Activated CD4-positive, alpha-beta memory T cell treated with anti-CD3 and anti-CD28 coated beads for 36 hours (primary cell): ENCODE measurements at regions of chr3 and their contacts with region 1.

Region 1: DNA sequence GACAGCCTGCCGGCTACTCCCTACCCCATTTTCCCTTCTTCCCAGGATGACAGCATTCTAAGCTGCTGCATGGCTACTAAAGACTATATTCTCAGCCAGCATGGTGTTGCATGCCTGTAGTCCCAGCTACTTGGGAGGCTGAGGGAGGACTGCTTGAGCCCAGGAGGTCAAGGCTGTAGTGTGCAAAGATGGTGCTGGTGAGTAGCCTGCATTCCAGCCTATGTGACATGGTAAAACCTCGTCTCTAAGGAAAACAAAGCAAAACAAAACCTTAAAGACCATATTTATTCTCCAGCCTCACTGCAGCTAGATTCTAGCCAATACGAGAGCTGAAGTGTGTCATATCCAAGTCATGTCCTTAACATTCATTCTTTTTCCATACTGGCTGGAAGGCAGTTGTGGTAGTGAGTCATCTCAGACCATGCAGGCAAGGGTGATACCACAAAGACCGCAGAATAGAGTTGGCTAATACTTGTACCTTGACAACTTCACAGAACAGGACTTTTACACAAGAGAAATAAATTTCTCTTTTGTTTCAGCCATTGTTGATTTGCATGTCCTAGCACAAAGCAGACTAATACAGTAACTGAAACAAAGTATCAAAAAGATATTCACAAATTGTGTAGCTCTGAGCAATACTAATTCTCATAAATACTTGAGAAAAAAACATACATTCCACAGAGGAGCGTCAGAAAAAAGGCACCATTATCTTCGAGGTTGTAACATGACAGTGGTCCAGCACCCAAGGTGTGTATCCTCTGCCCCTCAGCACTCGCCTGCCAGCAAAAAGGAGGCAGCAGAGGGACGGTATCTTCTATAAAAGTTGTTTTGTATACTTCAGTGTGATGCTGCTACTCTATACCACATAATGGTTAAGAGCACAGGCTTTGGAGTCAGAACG is 14.8 kb downstream of the PBRM1 start:
- DNase-seq: peak; percentile 84
- H3K4me3 Mint-ChIP-seq: peak overlapping the region; percentile 51
- H3K27ac Mint-ChIP-seq: peak overlapping the region; percentile 82
- H3K4me1 Mint-ChIP-seq: peaks cover 42% of the 10 kb centered on the region
- H3K27me3 Mint-ChIP-seq: no peaks in the 10 kb centered on the region

Region 2: GRCh38 chr3:51445544-51446280 is 1225.2 kb before region 1 on chr3:
- CTCF ChIA-PET with region 1: no interaction called
- POLR2A ChIA-PET with region 1: no interaction called
- intact Hi-C with region 1: no loop called
- DNase-seq: no peak
- H3K4me3 Mint-ChIP-seq: no peak overlapping the region
- H3K27ac Mint-ChIP-seq: peak overlapping the region; percentile 23
- H3K4me1 Mint-ChIP-seq: peaks cover 33% of the 10 kb centered on the region
- H3K27me3 Mint-ChIP-seq: no peaks in the 10 kb centered on the region

Region 3: GRCh38 chr3:52620580-52620979 is 50.3 kb before region 1 on chr3:
- CTCF ChIA-PET with region 1: no interaction called
- POLR2A ChIA-PET with region 1: interaction called, 4 read pairs
- intact Hi-C with region 1: loop called (anchors 1 kb)
- DNase-seq: no peak
- H3K4me3 Mint-ChIP-seq: no peak overlapping the region
- H3K27ac Mint-ChIP-seq: no peak overlapping the region
- H3K4me1 Mint-ChIP-seq: peaks cover 35% of the 10 kb centered on the region
- H3K27me3 Mint-ChIP-seq: no peaks in the 10 kb centered on the region

Region 4: GRCh38 chr3:52696830-52697621 is 26.2 kb after region 1 on chr3:
- CTCF ChIA-PET with region 1: no interaction called
- POLR2A ChIA-PET with region 1: no interaction called
- intact Hi-C with region 1: no loop called
- DNase-seq: no peak
- H3K4me3 Mint-ChIP-seq: no peak overlapping the region
- H3K27ac Mint-ChIP-seq: peak overlapping the region; percentile 79
- H3K4me1 Mint-ChIP-seq: peaks cover 45% of the 10 kb centered on the region
- H3K27me3 Mint-ChIP-seq: no peaks in the 10 kb centered on the region